Activated CD8-positive, alpha-beta T cell treated with anti-CD3 and anti-CD28 coated beads, Interleukin-2, amount 10 ng/mL, durations not matched to agents 7 days and 5 days (primary cell): ENCODE measurements at regions of chr9 and their contacts with region 1.

Region 1: DNA sequence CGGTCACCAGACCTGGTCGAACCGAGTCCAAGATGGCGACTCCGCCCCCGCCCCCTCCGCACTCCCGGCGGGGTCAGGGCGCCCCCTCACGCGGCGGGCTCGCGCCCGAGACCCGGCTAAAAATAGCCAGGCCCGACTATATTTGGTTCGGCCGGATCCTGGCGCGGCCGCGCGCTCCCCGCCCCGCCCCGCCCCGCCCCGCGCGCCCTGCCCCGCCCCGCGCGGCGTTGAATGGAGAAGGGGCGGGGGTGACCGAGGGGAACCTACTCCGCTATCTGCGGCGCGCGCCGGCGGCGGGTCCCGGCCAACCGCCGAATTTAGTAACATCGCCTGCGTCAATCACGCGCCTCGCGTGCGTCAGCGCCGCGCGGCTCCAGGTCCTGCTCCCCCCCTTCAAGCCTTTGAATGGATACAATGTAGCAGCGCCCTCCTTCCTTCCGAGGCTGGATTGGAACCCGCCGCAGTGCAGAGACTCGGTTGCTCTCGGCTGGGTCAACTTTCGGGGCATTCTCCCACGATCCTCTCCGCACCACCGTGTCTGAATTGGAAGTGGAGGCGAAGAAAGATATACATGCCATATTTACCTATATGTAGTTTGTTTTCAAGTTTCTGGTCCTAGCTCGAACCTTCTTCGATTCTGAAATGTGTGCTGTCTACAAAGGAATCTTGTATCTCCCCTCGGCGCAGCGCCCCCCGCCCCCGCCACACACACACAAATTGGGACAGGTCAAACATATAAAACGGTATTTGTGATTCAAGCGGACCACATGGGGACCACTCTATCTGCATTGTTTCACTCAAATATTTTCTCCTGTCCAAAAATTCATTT is 1.6 kb upstream of the NR4A3 start:
- DNase-seq: peak; percentile 93
- ATAC-seq: peak; percentile 48
- H3K4me3 Mint-ChIP-seq: peak overlapping the region; percentile 85
- H3K27ac Mint-ChIP-seq: peak overlapping the region; percentile 92
- H3K4me1 Mint-ChIP-seq: peaks cover 52% of the 10 kb centered on the region
- H3K27me3 Mint-ChIP-seq: peaks cover 11% of the 10 kb centered on the region

Region 2: GRCh38 chr9:99549441-99549840 is 270.6 kb before region 1 on chr9:
- CTCF ChIA-PET with region 1: no interaction called
- POLR2A ChIA-PET with region 1: no interaction called
- DNase-seq: no peak
- ATAC-seq: no peak
- H3K4me3 Mint-ChIP-seq: no peak overlapping the region
- H3K27ac Mint-ChIP-seq: no peak overlapping the region
- H3K4me1 Mint-ChIP-seq: no peaks in the 10 kb centered on the region
- H3K27me3 Mint-ChIP-seq: peaks cover 18% of the 10 kb centered on the region

Region 3: GRCh38 chr9:99782962-99783718 is 36.9 kb before region 1 on chr9:
- CTCF ChIA-PET with region 1: no interaction called
- POLR2A ChIA-PET with region 1: no interaction called
- DNase-seq: no peak
- ATAC-seq: no peak
- H3K4me3 Mint-ChIP-seq: no peak overlapping the region
- H3K27ac Mint-ChIP-seq: no peak overlapping the region
- H3K4me1 Mint-ChIP-seq: peaks cover 9% of the 10 kb centered on the region
- H3K27me3 Mint-ChIP-seq: peaks cover 26% of the 10 kb centered on the region

Region 4: GRCh38 chr9:99833735-99834134 is 13.7 kb after region 1 on chr9:
- CTCF ChIA-PET with region 1: interaction called, 45 read pairs
- POLR2A ChIA-PET with region 1: interaction called, 3 read pairs
- DNase-seq: no peak
- ATAC-seq: no peak
- H3K4me3 Mint-ChIP-seq: no peak overlapping the region
- H3K27ac Mint-ChIP-seq: no peak overlapping the region
- H3K4me1 Mint-ChIP-seq: peaks cover 15% of the 10 kb centered on the region
- H3K27me3 Mint-ChIP-seq: peaks cover 3% of the 10 kb centered on the region

Region 5: GRCh38 chr9:99851500-99851822 is 31.4 kb after region 1 on chr9:
- CTCF ChIA-PET with region 1: interaction called, 15 read pairs
- POLR2A ChIA-PET with region 1: interaction called, 4 read pairs
- DNase-seq: peak; percentile 85
- ATAC-seq: peak; percentile 90
- H3K4me3 Mint-ChIP-seq: peak overlapping the region; percentile 63
- H3K27ac Mint-ChIP-seq: peak overlapping the region; percentile 88
- H3K4me1 Mint-ChIP-seq: peaks cover 55% of the 10 kb centered on the region
- H3K27me3 Mint-ChIP-seq: no peaks in the 10 kb centered on the region

Region 6: DNA sequence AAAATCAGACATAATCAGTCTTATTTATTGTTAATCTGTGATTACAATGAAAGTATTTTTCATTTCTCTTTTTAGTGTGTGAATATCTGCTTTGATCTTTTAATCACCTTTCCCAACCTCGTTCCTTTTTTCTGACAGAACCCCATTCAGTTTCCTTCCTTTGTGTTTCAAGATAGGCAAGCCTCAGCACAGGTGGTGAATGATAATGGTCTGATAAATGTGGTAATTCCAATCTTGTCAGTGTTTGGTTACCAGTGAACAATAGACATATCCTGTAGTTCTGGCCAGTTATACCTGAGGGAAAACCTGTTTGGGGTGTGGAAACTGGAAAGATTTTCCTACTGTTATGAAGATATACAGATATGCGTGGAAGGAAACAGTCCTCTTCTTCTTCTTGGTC is 99.9 kb after region 1 on chr9:
- CTCF ChIA-PET with region 1: interaction called, 13 read pairs
- POLR2A ChIA-PET with region 1: no interaction called
- DNase-seq: no peak
- ATAC-seq: no peak
- H3K4me3 Mint-ChIP-seq: no peak overlapping the region
- H3K27ac Mint-ChIP-seq: no peak overlapping the region
- H3K4me1 Mint-ChIP-seq: peaks cover 34% of the 10 kb centered on the region
- H3K27me3 Mint-ChIP-seq: no peaks in the 10 kb centered on the region

Region 7: GRCh38 chr9:100011062-100011681 is 191.1 kb after region 1 on chr9:
- CTCF ChIA-PET with region 1: interaction called, 27 read pairs
- POLR2A ChIA-PET with region 1: no interaction called
- DNase-seq: peak; percentile 73
- ATAC-seq: peak; percentile 47
- H3K4me3 Mint-ChIP-seq: no peak overlapping the region
- H3K27ac Mint-ChIP-seq: no peak overlapping the region
- H3K4me1 Mint-ChIP-seq: no peaks in the 10 kb centered on the region
- H3K27me3 Mint-ChIP-seq: no peaks in the 10 kb centered on the region